OCI-LY7 (cell line): ENCODE measurements at regions of chr1 and their contacts with region 1.

Region 1: GRCh38 chr1:226121587-226122400 is 59.3 kb downstream of the H3-3A start:
- DNase-seq: peak; percentile 92
- H3K4me3 ChIP-seq: peak overlapping the region; percentile 75
- H3K27ac ChIP-seq: peak overlapping the region; percentile 95
- H3K4me1 ChIP-seq: peaks cover 62% of the 10 kb centered on the region
- CTCF ChIP-seq: peak; percentile 75

Region 2: GRCh38 chr1:225480825-225481434 is 640.9 kb before region 1 on chr1:
- CTCF ChIA-PET with region 1: no interaction called
- POLR2A ChIA-PET with region 1: no interaction called
- intact Hi-C with region 1: loop called (anchors 2 kb)
- DNase-seq: peak; percentile 92
- H3K4me3 ChIP-seq: peak overlapping the region; percentile 35
- H3K27ac ChIP-seq: peak overlapping the region; percentile 92
- H3K4me1 ChIP-seq: peaks cover 76% of the 10 kb centered on the region
- CTCF ChIP-seq: peak; percentile 97

Region 3: DNA sequence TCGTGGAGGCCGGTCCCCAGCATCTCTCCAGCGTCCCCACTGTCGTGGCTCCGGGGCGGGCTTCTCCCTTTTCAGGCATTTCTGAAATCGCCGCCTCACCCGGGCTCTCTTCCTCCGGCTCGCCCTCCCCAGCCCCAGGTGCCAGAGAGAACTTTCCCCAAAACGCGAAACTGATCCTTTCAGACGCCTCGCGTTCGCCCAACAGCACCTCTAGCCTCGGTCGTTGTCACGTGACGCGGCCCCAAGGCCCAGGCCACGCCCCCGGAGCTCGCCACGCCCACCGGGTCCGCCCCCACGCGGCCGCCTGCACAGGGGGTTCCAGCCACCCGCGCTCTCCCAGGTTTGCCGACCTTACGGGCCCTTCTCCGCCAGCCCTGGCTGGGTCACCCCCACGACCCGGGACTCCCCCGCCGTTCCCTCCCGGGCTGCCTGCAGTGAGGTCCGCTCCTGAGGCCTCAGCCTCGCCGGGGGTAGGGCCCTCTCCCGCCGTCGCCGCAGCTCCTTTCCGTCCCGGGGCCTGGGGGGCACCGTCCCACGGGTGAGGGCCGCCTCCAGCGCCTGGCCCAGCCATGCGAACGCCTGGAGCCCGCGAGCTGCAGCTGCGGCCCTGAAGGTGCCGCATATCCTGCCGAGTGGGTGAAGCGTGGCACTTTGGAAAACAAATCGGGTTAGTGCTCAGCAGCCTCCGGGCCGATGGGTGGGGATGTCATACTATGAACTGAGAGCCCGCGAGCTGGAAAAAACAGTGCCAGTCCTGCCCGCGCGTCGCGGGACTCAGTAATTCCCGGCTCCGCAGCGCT is 38.3 kb before region 1 on chr1:
- CTCF ChIA-PET with region 1: no interaction called
- POLR2A ChIA-PET with region 1: interaction called, 5 read pairs
- intact Hi-C with region 1: loop called (anchors 5 kb)
- DNase-seq: peak; percentile 92
- H3K4me3 ChIP-seq: peak overlapping the region; percentile 70
- H3K27ac ChIP-seq: peak overlapping the region; percentile 49
- H3K4me1 ChIP-seq: peaks cover 33% of the 10 kb centered on the region
- CTCF ChIP-seq: no peak; the same call in 1 of the 2 replicates

Region 4: DNA sequence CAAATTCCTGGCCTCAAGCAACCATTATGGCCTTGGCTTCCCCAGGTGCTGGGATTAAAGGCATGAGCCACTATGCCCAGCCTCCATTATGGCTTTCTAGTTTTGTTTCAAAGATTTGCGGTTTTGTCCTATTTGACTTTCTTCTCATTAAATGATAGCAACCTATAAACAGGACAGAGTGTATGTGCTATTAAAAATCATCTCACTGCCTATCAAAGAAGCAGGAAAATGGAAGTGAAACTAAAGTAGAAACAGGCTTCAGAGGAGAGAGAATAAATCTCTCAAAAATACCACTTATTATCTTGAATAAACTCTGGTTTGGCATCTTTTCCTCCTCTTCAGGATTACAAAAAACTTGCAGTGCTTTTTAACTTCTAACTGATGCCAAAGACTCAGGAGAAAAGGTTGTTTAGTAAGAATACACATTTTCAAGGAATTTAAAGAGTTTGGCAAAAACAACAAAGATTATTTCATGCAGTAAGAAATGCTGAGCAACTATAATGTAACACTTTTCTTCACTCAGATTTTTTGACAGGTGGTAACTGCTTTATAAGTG is 36.0 kb after region 1 on chr1:
- CTCF ChIA-PET with region 1: interaction called, 7 read pairs
- POLR2A ChIA-PET with region 1: interaction called, 33 read pairs
- intact Hi-C with region 1: no loop called
- DNase-seq: peak; percentile 71
- H3K4me3 ChIP-seq: peak overlapping the region; percentile 26
- H3K27ac ChIP-seq: peak overlapping the region; percentile 85
- H3K4me1 ChIP-seq: peaks cover 58% of the 10 kb centered on the region
- CTCF ChIP-seq: no peak

Region 5: DNA sequence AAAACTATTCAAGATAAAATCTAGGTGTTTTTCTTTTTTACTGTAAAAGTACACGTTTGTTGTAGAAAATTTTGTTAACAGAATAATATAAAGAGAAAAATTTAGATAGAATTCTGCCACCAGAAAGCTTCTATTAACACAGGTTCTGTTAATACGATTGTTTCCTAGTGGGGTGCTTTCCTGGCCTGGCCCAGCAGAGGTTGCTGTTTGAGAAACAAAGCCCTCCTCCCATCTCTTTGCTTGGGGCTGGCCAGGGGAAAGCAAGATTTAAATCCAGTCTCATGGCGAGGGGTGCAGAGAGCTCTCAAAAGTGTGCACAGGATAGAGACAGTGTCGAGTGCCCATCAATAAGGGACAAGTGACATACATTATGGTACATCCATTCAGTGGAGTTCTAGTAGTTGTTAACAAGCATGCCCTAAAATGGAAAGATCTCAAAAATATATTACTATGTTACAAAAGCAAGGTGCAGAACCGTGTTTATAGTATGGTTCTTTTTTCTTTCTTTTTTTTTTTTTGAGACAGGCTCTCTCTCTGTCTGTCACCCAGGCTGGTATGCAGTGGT is 79.3 kb after region 1 on chr1:
- CTCF ChIA-PET with region 1: interaction called, 44 read pairs
- POLR2A ChIA-PET with region 1: interaction called, 50 read pairs
- intact Hi-C with region 1: loop called (anchors 1 kb)
- DNase-seq: peak; percentile 79
- H3K4me3 ChIP-seq: no peak overlapping the region
- H3K27ac ChIP-seq: peak overlapping the region; percentile 24
- H3K4me1 ChIP-seq: peaks cover 48% of the 10 kb centered on the region
- CTCF ChIP-seq: peak; percentile 91

Region 6: DNA sequence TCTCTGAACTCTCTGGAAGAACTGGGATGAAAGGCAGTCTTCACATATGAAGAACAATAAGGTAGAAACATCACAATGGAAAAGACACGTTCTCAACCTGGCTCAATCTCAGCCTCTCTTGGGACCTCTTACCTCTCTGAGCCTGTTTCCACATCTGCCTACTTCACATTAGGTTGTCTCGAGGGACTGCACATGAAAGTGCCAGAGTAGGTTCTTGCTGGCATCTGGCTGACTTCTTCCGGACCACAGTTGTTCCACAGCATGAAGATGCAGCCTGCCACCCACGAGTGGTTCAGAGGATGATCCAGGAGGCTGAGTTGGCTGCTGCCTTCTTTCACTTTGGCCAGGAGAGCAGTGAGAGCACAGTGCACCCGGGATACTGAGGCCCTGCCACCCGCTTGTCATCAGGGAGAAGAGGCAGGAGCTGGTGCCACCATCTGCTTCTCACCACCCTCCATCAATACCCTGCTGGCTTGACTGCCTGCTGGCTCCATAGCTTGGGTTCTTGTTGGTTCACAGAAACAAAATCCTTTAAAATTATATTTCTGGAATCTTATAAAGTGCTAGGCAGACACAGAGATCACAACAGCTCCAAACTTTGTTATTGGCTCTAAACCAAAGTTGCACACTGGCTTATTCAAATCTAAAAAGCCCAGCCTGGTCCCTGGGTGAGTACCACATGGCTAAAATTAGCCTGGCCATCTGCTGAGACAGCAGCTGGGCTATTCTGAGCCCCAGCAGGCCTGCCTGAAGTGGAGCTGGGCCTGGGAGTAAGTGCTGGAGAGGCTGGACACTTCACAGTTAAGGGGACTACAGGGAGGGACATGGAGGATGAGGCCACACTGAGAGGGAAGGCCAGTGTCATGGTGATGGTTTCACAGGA is 234.1 kb after region 1 on chr1:
- CTCF ChIA-PET with region 1: interaction called, 3 read pairs
- POLR2A ChIA-PET with region 1: interaction called, 4 read pairs
- intact Hi-C with region 1: loop called (anchors 1 kb)
- DNase-seq: peak; percentile 96
- H3K4me3 ChIP-seq: peak overlapping the region; percentile 50
- H3K27ac ChIP-seq: peak overlapping the region; percentile 98
- H3K4me1 ChIP-seq: peaks cover 76% of the 10 kb centered on the region
- CTCF ChIP-seq: no peak